ENCODE measurements at regions of chr12 and their contacts with region 1.

Region 1: GRCh38 chr12:122123051-122123760 is 44.6 kb downstream of the MLXIP start:
- DNase-seq: no peak
- H3K4me3 ChIP-seq: no peak overlapping the region
- H3K27ac ChIP-seq: no peak overlapping the region
- H3K27me3 ChIP-seq: no peaks in the 10 kb centered on the region
- CTCF ChIP-seq: peak; percentile 77

Region 2: GRCh38 chr12:122051231-122051876 is 71.9 kb before region 1 on chr12:
- CTCF ChIA-PET with region 1: interaction called, 106 read pairs
- POLR2A ChIA-PET with region 1: no interaction called
- DNase-seq: no peak
- H3K4me3 ChIP-seq: no peak overlapping the region
- H3K27ac ChIP-seq: peak overlapping the region; percentile 47
- H3K27me3 ChIP-seq: no peaks in the 10 kb centered on the region
- CTCF ChIP-seq: no peak

Region 3: DNA sequence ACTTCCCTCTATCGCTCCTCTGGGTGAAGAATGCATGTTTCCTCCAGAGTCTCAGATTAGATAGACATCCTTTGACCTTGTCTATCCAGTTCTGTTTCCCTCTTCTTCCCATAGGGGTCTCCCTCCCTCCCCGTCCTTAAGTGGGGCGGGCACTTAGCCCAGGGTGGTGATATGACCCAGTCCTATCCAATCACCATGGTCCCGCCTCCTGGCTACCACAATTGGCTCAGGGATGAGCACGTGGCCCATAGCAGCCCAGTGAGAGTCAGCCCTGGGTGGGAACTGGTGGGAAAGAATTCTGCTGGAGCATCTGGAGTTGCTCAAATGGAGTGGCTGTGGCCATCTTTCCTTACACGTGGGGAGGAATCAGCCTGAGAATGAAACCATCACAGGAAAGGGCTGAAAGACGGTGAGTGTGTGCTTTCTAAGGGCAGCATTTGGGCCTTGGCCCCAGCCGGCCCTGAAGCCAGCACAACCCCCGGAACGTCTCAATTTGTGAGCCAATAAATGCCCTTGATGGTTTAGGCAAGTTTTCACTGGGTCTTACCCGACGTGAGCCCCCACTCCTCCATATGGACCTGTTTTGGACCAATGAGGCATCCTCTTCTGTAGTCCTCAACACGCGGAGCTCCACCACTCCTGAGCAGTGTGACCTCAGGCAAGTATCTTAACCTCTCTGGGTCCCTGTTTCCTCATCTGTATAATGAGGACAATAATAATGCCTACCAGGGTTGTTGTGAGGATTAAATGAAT is 59.0 kb before region 1 on chr12:
- CTCF ChIA-PET with region 1: interaction called, 106 read pairs
- POLR2A ChIA-PET with region 1: no interaction called
- DNase-seq: no peak
- H3K4me3 ChIP-seq: no peak overlapping the region
- H3K27ac ChIP-seq: peak overlapping the region; percentile 79
- H3K27me3 ChIP-seq: no peaks in the 10 kb centered on the region
- CTCF ChIP-seq: peak; percentile 47

Region 4: GRCh38 chr12:122090759-122091515 is 32.3 kb before region 1 on chr12:
- CTCF ChIA-PET with region 1: interaction called, 10 read pairs
- POLR2A ChIA-PET with region 1: no interaction called
- DNase-seq: peak; percentile 90
- H3K4me3 ChIP-seq: no peak overlapping the region
- H3K27ac ChIP-seq: peak overlapping the region; percentile 95
- H3K27me3 ChIP-seq: no peaks in the 10 kb centered on the region
- CTCF ChIP-seq: no peak

Region 5: GRCh38 chr12:122097927-122098756 is 25.1 kb before region 1 on chr12:
- CTCF ChIA-PET with region 1: interaction called, 11 read pairs
- POLR2A ChIA-PET with region 1: no interaction called
- DNase-seq: no peak
- H3K4me3 ChIP-seq: no peak overlapping the region
- H3K27ac ChIP-seq: peak overlapping the region; percentile 52
- H3K27me3 ChIP-seq: no peaks in the 10 kb centered on the region
- CTCF ChIP-seq: no peak

Region 6: GRCh38 chr12:122322501-122322900 is 199.3 kb after region 1 on chr12:
- CTCF ChIA-PET with region 1: no interaction called
- POLR2A ChIA-PET with region 1: no interaction called
- DNase-seq: no peak
- H3K4me3 ChIP-seq: no peak overlapping the region
- H3K27ac ChIP-seq: no peak overlapping the region
- H3K27me3 ChIP-seq: no peaks in the 10 kb centered on the region
- CTCF ChIP-seq: no peak